ENCODE measurements at regions of chr16 and their contacts with region 1.

Region 1: GRCh38 chr16:85316321-85316919 is 204.1 kb upstream of the CIBAR2 start:
- DNase-seq: peak in 1 of 2 experiments; percentile 66
- H3K4me3 ChIP-seq: no peak overlapping the region
- H3K27ac ChIP-seq: no peak overlapping the region
- H3K4me1 ChIP-seq: no peaks in the 10 kb centered on the region
- H3K27me3 ChIP-seq: no peaks in the 10 kb centered on the region
- CTCF ChIP-seq: peak; percentile 89

Region 2: DNA sequence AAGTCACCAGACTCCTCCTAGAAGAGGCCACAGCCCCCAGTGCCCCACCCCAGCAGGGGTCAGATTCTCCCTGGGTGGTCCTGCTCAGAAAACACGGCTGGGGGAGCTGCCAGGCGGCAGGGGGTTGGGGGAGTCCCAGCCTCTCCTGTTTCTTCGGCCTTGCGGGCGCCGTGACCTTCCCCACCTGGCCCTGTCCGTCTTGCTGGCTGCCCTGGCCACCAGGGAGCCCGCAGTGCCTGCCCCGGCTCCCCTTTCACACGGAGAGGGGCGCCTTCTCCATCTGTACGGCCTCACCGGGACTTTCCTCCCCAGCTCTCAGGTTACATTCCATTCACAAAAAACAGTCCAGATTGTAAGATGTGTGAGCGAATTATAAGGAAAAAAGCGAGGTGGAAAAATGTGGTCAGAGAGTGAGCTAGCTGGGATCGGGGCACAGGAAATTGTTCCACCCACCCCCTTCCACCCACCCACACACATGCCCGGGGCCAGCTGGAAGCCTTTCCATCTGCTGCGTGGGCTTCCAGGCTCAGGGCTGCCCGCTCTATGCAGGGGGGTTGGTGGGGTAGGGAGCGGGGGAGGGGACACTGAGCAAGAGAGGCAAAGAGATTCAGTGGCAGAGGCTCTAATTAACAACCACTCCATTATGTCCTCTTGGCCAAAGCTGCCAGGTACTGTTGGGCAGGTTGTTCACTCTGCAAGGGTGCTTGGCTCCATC is 189.6 kb before region 1 on chr16:
- CTCF ChIA-PET with region 1: no interaction called
- POLR2A ChIA-PET with region 1: no interaction called
- intact Hi-C with region 1: no loop called
- DNase-seq: no peak
- H3K4me3 ChIP-seq: no peak overlapping the region
- H3K27ac ChIP-seq: no peak overlapping the region
- H3K4me1 ChIP-seq: no peaks in the 10 kb centered on the region
- H3K27me3 ChIP-seq: no peaks in the 10 kb centered on the region
- CTCF ChIP-seq: no peak

Region 3: GRCh38 chr16:85420501-85421337 is 104.3 kb after region 1 on chr16:
- CTCF ChIA-PET with region 1: no interaction called
- POLR2A ChIA-PET with region 1: no interaction called
- intact Hi-C with region 1: loop called (anchors 1 kb)
- DNase-seq: peak in 1 of 2 experiments; percentile 75
- H3K4me3 ChIP-seq: no peak overlapping the region
- H3K27ac ChIP-seq: no peak overlapping the region
- H3K4me1 ChIP-seq: peaks cover 20% of the 10 kb centered on the region
- H3K27me3 ChIP-seq: no peaks in the 10 kb centered on the region
- CTCF ChIP-seq: peak; percentile 99

Measured in PC-9 (cell line).